ENCODE measurements at regions of chr17 and their contacts with region 1.

Region 1: GRCh38 chr17:73311781-73312641 is at the start of gene CDC42EP4:
- DNase-seq: peak; percentile 93 to 99 (median 96)

Region 2: GRCh38 chr17:73261952-73262675 is 49.9 kb before region 1 on chr17:
- intact Hi-C with region 1: loop called (anchors 5 kb)
- DNase-seq: peak in 9 of 10 donors; percentile 43 to 94 (median 70)

Region 3: GRCh38 chr17:73342050-73342522 is 30.1 kb after region 1 on chr17:
- intact Hi-C with region 1: loop called (anchors 2 kb)
- DNase-seq: peak; percentile 83 to 99 (median 92)

Region 4: DNA sequence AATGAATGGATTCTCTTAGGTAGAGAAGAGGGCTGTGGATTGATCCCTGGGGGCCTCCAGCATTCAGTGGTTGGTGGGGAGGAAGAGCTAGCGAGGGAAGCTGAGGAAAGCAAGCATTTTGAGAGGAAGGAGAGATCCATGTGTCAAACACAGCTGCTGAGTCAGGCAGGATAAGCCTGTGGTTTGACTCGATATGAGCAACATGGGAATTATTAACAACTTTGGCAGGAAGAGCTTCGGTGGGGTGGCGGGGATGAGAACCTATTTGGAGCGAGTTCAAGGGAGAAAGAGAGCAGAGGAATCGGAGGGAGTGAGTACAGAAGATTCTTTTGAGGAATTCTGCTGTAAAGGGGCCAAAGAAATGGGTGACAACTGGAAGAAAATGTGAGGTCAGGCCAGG is 59.3 kb after region 1 on chr17:
- intact Hi-C with region 1: loop called (anchors 2 kb)
- DNase-seq: no peak

Measured in posterior cingulate gyrus (tissue), 11 donors.